ENCODE measurements at regions of chr5 and their contacts with region 1.

Region 1: DNA sequence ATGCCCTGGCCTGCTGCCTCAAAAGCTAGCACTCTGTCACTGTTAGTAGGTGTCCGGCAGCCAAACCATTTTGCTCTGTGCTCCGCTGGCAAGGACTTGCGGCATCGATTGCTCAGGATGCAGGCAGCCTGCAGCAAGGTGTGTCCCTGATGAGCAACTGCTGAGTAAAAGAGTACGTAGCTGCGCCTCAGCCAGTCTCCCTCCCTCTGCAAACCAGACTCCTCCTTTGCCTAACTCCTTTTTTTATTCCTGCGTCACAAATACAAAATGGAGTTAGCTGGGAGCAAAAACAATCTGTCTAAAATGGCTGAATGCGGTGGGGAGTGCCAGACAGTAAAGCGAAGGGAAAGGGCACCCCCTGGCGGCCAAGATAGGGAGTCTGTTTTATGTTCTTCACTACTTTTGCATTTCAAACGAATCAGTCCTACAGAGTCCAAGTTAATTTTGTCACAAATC is 61.1 kb downstream of the DIAPH1 start:
- DNase-seq: peak; percentile 95
- H3K4me3 ChIP-seq: no peak overlapping the region
- H3K27ac ChIP-seq: peak overlapping the region; percentile 98
- H3K4me1 ChIP-seq: peaks cover 40% of the 10 kb centered on the region
- H3K27me3 ChIP-seq: no peaks in the 10 kb centered on the region
- CTCF ChIP-seq: peak; percentile 88

Region 2: GRCh38 chr5:141199359-141200235 is 358.1 kb before region 1 on chr5 and contains the start of gene PCDHB11:
- CTCF ChIA-PET with region 1: interaction called, 7 read pairs
- POLR2A ChIA-PET with region 1: no interaction called
- intact Hi-C with region 1: loop called (anchors 1 kb)
- DNase-seq: peak; percentile 84
- H3K4me3 ChIP-seq: peak within 1 kb of the TSS; percentile 54
- H3K27ac ChIP-seq: peak within 1 kb of the TSS; percentile 77
- H3K4me1 ChIP-seq: no peaks in the 10 kb centered on the region
- H3K27me3 ChIP-seq: no peaks in the 10 kb centered on the region
- CTCF ChIP-seq: peak; percentile 85
- total RNA-seq, gene PCDHB11: 14.2 and 15.3 TPM in 2 replicates

Region 3: GRCh38 chr5:141320225-141321169 is 237.2 kb before region 1 on chr5 and contains the start of gene TAF7:
- CTCF ChIA-PET with region 1: no interaction called
- POLR2A ChIA-PET with region 1: no interaction called
- intact Hi-C with region 1: loop called (anchors 1 kb)
- DNase-seq: peak; percentile 97
- H3K4me3 ChIP-seq: peak within 1 kb of the TSS; percentile 78
- H3K27ac ChIP-seq: peak within 1 kb of the TSS; percentile 97
- H3K4me1 ChIP-seq: no peaks in the 10 kb centered on the region
- H3K27me3 ChIP-seq: no peaks in the 10 kb centered on the region
- CTCF ChIP-seq: peak; percentile 90
- total RNA-seq, gene TAF7: 73.4 and 78.3 TPM in 2 replicates

Region 4: DNA sequence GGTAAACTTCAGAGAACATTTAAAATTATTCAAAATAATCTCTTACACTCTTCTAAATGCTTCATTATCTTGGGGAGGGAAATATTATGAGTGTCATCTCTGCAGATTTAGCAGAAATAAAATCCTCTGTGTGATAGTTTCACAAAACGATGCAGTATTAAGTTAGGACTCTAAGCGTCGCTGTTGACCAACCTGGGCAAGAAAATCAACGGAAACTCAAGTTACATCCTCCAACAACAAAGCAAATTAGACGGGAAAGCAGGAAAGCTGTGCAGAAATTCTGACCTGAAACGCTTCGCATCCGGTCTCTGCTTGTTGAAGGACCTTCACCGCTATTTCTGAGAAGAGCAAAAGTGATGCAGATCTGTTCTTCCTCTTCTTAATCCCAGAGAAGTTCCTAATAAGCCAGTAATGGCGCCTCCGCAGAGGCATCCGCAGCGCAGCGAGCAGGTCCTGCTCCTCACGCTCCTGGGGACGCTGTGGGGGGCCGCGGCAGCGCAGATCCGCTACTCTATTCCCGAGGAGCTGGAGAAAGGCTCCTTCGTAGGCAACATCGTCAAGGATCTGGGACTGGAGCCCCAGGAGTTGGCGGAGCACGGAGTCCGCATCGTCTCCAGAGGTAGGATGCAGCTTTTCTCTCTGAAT is 183.9 kb before region 1 on chr5 and contains the start of gene PCDHGA6:
- CTCF ChIA-PET with region 1: interaction called, 13 read pairs
- POLR2A ChIA-PET with region 1: no interaction called
- intact Hi-C with region 1: loop called (anchors 1 kb)
- DNase-seq: peak; percentile 70
- H3K4me3 ChIP-seq: peak within 1 kb of the TSS; percentile 51
- H3K27ac ChIP-seq: peak within 1 kb of the TSS; percentile 59
- H3K4me1 ChIP-seq: no peaks in the 10 kb centered on the region
- H3K27me3 ChIP-seq: no peaks in the 10 kb centered on the region
- CTCF ChIP-seq: peak; percentile 69
- total RNA-seq, gene PCDHGA6: 20.2 and 21.6 TPM in 2 replicates

Region 5: DNA sequence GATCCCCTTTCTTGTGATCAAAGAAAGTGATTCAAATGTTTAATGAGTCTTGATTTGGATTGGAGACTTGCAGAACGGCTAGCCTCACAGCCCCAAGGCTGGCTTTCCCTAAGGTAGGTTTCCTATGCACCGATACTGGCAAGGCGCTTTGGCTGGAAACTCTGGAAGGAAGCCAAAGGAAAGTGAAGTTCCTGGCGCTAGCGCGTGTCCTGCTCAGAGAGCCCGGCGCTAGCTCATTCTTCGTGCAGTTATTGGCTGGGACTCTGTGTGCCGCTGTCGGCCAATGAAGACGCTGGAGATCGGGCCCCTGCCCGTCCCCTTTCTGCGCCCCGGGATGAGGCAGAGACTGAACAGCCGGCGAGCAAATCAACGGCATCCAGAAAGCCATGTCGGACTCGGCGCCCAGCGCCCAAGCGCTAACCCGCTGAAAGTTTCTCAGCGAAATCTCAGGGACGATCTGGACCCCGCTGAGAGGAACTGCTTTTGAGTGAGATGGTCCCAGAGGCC is 82.0 kb before region 1 on chr5 and contains the start of gene PCDHGC3:
- CTCF ChIA-PET with region 1: interaction called, 13 read pairs
- POLR2A ChIA-PET with region 1: no interaction called
- intact Hi-C with region 1: loop called (anchors 2 kb)
- DNase-seq: peak; percentile 98
- H3K4me3 ChIP-seq: peak within 1 kb of the TSS; percentile 80
- H3K27ac ChIP-seq: peak within 1 kb of the TSS; percentile 89
- H3K4me1 ChIP-seq: peaks cover 35% of the 10 kb centered on the region
- H3K27me3 ChIP-seq: no peaks in the 10 kb centered on the region
- CTCF ChIP-seq: peak; percentile 55
- total RNA-seq, gene PCDHGC3: 103 and 112 TPM in 2 replicates